ENCODE measurements at regions of chr17 and their contacts with region 1.

Region 1: GRCh38 chr17:47941236-47941994 is at the start of gene PNPO:
- DNase-seq: peak; percentile 97

Region 2: GRCh38 chr17:47831003-47831933 is 110.1 kb before region 1 on chr17 and contains the starts of genes LRRC46 and MRPL10:
- CTCF ChIA-PET with region 1: no interaction called
- POLR2A ChIA-PET with region 1: interaction called, 15 read pairs
- DNase-seq: peak; percentile 99

Region 3: DNA sequence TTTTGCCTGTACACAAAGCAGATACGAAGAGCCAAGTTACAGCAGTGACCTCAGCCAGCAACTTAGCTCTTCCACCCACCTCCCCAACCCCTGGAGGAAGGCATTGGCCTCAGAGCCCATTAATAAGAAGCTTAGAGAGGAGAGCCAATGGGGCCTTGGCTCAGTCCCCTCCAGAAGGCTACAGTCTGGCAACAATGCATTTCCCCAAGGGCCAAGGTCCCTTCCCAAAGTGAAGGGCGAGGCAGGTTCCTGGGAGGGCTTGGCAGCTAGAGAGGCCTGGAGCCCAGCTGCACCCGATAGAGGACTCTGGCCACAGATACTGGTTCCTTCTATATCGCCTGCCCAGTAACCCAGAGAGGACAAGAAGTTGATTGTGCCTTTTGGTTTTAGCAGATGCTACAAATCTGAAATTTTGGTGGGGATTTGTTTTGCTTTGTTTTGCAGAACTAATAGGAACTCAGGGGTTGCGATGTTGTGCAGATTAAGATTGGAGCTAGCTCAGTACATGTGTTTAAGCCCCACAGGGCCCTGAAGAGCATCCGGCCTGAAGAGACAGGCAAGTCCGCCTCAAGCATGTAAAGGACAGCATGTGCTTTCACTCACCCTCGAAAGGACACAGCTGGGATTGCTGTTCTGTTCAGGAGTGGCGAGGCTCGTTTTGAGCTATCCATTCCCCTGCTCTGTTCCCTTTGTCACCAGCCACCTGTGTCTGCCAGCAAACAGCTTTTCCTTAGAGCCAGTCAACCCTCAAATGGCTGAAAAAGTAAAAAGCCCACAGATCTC is 12.0 kb before region 1 on chr17:
- CTCF ChIA-PET with region 1: interaction called, 3 read pairs
- POLR2A ChIA-PET with region 1: interaction called, 18 read pairs
- DNase-seq: no peak

Region 4: DNA sequence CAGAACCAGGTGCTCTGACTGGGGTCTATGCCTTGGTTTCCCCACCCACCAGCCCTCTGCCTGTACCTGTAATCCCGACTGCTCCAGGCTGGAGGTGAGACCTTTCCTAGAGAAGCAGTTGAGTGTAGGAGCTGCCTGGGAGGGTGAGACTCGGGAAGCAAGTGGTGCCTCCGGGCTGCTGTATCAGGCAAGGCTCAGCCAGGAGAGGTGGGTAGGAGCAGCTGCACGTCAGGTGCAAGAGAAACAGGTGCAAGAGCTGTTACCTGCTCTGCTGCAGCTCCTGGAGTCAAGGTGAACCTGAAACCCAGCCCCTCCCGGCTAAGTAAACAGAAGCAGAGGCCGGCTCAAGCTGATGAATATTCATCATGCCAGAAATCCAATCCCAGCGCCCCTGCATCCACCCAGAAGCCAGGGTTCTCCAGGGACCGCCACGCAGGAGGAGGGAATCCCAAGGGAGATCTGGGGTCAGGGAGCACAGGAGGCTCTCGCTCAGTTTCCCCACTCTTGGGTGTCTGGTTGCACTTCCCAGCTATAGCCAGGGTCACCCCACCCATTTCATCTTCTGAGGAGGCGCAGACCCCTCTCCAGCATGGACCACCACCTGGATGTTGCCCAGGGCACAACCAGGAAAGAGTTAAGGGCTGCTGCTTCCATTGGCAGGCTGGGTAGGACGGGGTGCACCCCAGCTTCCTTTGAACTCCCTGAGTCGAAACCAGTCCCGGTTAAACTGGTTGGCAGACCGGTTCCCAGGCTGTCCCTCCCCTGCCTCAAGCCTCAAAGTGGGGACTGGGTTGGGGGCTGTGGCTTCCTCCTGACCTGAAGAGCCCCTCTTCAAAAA is 16.4 kb after region 1 on chr17 and contains the start of gene PRR15L:
- CTCF ChIA-PET with region 1: interaction called, 16 read pairs
- POLR2A ChIA-PET with region 1: interaction called, 28 read pairs
- DNase-seq: no peak

Measured in HEK293T (cell line).